Activated T-helper 1 cell treated with anti-CD3 and anti-CD28 coated beads, Interleukin-12 subunit alpha, Interleukin-12 subunit beta, Interleukin-2, Interleukin-4 antibody, amounts not matched to agents 30 ng/mL and 10 ng/mL and 1 ng/mL, durations not matched to agents 14 hours and 24 hours and 36 hours (primary cell): ENCODE measurements at regions of chr14 and their contacts with region 1.

Region 1: GRCh38 chr14:20662968-20663732 is 21.2 kb upstream of the RNASE4 start:
- DNase-seq: peak; percentile 69
- H3K4me3 Mint-ChIP-seq: peak overlapping the region; percentile 82
- H3K27ac Mint-ChIP-seq: peak overlapping the region; percentile 28
- H3K4me1 Mint-ChIP-seq: peaks cover 38% of the 10 kb centered on the region
- H3K27me3 Mint-ChIP-seq: peaks cover 11% of the 10 kb centered on the region

Region 2: GRCh38 chr14:20632682-20633428 is 30.3 kb before region 1 on chr14:
- intact Hi-C with region 1: loop called (anchors 1 kb)
- DNase-seq: peak; percentile 53
- H3K4me3 Mint-ChIP-seq: peak overlapping the region; percentile 85
- H3K27ac Mint-ChIP-seq: peak overlapping the region; percentile 91
- H3K4me1 Mint-ChIP-seq: peaks cover 56% of the 10 kb centered on the region
- H3K27me3 Mint-ChIP-seq: peaks cover 76% of the 10 kb centered on the region

Region 3: GRCh38 chr14:20846560-20846959 is 183.4 kb after region 1 on chr14:
- intact Hi-C with region 1: no loop called
- DNase-seq: no peak
- H3K4me3 Mint-ChIP-seq: no peak overlapping the region
- H3K27ac Mint-ChIP-seq: no peak overlapping the region
- H3K4me1 Mint-ChIP-seq: no peaks in the 10 kb centered on the region
- H3K27me3 Mint-ChIP-seq: peaks cover 7% of the 10 kb centered on the region

Region 4: GRCh38 chr14:21168055-21168454 is 504.9 kb after region 1 on chr14:
- intact Hi-C with region 1: no loop called
- DNase-seq: no peak
- H3K4me3 Mint-ChIP-seq: no peak overlapping the region
- H3K27ac Mint-ChIP-seq: no peak overlapping the region
- H3K4me1 Mint-ChIP-seq: no peaks in the 10 kb centered on the region
- H3K27me3 Mint-ChIP-seq: peaks cover 33% of the 10 kb centered on the region

Region 5: GRCh38 chr14:21802441-21802840 is 1139.3 kb after region 1 on chr14:
- intact Hi-C with region 1: loop called (anchors 5 kb)
- DNase-seq: no peak
- H3K4me3 Mint-ChIP-seq: no peak overlapping the region
- H3K27ac Mint-ChIP-seq: no peak overlapping the region
- H3K4me1 Mint-ChIP-seq: no peaks in the 10 kb centered on the region
- H3K27me3 Mint-ChIP-seq: peaks cover 7% of the 10 kb centered on the region